Breast epithelium (tissue), 4 donors: ENCODE measurements at regions of chr12 and their contacts with region 1.

Region 1: GRCh38 chr12:117144599-117144998 is 45.4 kb upstream of the TESC start:
- DNase-seq: no peak
- H3K4me3 ChIP-seq: no peak overlapping the region
- H3K27ac ChIP-seq: no peak overlapping the region
- H3K4me1 ChIP-seq: no peaks in the 10 kb centered on the region
- H3K27me3 ChIP-seq: no peaks in the 10 kb centered on the region
- CTCF ChIP-seq: no peak
- POLR2A ChIP-seq: no peak

Region 2: DNA sequence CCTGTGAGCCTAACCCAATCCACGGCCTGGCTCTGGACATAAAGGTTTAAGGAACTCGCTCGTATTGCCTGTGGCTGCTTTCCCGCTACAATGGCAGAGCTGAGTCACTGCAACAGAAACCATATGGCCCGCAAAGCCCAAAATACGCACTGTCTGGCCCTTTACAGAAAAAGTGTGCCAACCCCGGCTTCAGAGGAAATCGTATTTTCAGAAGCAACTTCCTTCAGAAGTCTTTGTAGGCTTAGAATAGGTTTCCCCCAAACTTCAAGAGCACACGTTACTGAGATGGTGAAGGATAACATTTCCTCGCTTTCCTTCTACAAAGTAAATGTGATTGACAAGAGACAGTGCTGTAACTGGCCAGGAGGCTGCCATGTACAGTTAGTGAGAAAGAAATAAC is 10.5 kb before region 1 on chr12:
- intact Hi-C with region 1: loop called (anchors 1 kb)
- DNase-seq: no peak
- H3K4me3 ChIP-seq: no peak overlapping the region
- H3K27ac ChIP-seq: no peak overlapping the region
- H3K4me1 ChIP-seq: no peaks in the 10 kb centered on the region
- H3K27me3 ChIP-seq: no peaks in the 10 kb centered on the region
- CTCF ChIP-seq: no peak
- POLR2A ChIP-seq: no peak